ENCODE measurements at regions of chr2 and their contacts with region 1.

Region 1: DNA sequence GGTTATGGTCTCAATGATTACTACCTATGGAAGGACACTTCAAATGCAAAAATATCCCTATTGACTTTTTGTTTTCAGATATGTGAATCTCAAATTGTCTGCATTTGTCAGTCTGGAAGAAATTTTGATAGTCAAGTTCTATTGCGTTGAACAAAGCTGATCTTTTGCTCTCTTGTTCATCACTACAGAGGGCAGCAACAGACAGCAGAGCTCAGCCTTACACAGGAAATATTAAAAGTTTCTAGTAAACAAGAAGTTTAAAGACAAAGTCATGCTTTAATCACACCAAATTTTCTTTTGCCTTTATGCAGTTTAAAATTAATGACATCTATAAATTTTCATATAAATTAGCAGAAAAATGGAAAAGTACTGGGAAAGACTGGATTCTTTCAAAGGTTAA is 617.5 kb downstream of the NR4A2 start:
- DNase-seq: no peak
- H3K4me3 ChIP-seq: no peak overlapping the region
- CTCF ChIP-seq: no peak
- POLR2A ChIP-seq: no peak

Region 2: DNA sequence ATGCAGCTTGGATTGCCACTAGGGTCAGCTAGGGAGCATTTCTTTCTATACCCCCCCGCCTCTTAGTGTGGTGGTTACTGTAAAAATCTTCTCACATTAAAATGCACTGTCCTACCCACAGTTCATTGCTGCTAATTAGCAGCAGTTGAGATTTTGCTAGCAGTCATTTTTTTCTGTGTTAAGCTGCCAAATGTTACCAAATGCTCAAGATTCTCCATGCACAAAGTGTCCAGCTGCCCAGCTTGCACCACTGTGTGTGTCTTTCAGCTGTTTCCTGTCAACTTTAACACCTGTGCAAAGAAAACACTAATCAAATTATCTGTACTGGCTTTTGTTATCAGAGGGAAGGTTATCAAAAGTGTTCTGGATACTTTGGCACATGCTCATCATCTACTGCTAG is 61.8 kb before region 1 on chr2:
- intact Hi-C with region 1: no loop called
- DNase-seq: no peak
- H3K4me3 ChIP-seq: no peak overlapping the region
- CTCF ChIP-seq: no peak
- POLR2A ChIP-seq: no peak

Region 3: GRCh38 chr2:155675920-155676319 is 39.1 kb before region 1 on chr2:
- intact Hi-C with region 1: no loop called
- DNase-seq: no peak
- H3K4me3 ChIP-seq: no peak overlapping the region
- CTCF ChIP-seq: no peak
- POLR2A ChIP-seq: no peak

Region 4: DNA sequence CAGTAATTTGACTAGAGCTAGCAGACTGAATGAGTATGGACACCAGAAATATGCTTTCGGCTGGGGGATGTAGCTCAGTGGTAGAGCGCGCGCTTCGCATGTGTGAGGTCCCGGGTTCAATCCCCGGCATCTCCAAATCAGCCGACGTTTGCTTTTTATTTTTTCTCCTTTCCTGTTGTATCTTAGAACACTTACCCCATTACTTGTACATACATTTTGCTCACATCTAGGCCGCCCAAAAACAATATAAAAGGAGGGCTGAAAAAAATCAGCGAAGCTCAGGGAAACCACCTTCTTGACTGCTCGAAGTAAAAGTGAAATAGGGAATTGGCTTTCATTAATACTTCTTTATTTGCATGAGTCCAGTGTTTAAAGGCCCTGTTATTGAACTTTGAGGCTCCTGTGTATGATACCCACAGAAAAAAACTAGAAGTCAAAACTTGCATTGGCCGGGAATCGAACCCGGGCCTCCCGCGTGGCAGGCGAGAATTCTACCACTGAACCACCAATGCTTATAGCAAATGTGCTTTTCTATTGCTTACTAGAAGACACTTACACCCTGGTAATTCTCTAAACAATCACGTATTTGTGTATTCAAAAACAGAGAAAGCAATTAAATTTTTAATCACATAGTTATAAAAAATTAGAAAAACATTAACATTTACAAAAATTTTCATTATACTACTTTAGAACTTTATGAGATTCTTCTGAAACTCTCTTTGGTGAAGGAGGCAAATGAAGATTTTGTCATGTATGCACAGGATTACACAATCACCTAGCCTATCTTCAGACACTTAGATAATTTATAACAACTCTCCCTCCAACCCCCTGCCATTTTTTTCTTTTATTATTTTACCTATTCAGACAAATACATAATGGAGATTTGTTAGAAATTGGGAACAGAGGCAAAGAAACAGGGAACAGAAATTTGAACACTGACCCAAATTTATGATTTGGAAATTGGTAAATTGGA is 686.0 kb after region 1 on chr2:
- intact Hi-C with region 1: loop called (anchors 10 kb)
- DNase-seq: peak; percentile 82 to 93
- H3K4me3 ChIP-seq: peak overlapping the region; percentile 58
- CTCF ChIP-seq: no peak
- POLR2A ChIP-seq: no peak

Measured in lower leg skin (tissue), 4 donors.